ENCODE measurements at regions of chr12 and their contacts with region 1.

Region 1: GRCh38 chr12:14986449-14986848 is 13.6 kb downstream of the PDE6H start:
- DNase-seq: no peak
- H3K4me3 ChIP-seq: no peak overlapping the region
- H3K27ac ChIP-seq: no peak overlapping the region
- H3K4me1 ChIP-seq: no peaks in the 10 kb centered on the region
- H3K27me3 ChIP-seq: no peaks in the 10 kb centered on the region
- CTCF ChIP-seq: peak in 1 of 2 donors; percentile 20

Region 2: DNA sequence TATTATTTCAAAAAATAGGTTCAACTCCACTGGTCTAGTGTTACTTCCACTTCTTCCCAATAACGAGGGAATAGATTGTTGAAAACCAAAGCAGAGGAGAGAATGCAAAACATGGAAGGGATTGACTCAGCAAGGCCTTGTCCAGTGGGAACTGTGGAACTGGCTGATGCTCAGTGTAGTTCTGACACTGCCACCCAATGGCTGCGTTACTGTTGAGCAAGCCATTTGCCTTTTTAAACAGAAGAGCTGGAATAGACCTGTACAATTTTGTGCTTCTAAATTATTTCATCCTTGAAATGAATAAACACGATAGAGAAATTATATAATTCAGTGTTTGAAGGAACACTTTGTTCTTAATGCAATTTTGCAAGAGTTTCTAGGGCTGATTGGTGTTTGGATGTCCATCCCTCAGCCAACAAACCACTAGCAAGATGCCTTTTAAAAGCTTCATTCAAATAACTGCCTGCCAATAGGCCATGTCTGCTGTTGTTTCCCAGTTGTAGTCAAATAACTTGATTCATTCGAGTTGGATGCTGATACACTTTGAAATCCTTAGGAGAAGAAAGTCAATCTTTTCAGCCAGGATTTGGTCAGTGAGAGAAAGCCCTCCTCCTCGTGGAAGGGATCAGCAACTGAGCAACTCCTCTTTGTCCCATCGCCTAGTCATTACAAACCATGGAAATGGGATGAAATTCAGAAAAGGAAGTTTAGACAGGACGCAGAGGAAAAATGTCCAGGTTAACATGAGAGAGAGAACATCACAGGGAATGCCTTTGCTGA is 93.5 kb before region 1 on chr12:
- CTCF ChIA-PET with region 1: interaction called, 25 read pairs
- dilution Hi-C with region 1: no loop called
- in situ Hi-C with region 1: no loop called
- intact Hi-C with region 1: no loop called
- DNase-seq: no peak
- H3K4me3 ChIP-seq: no peak overlapping the region
- H3K27ac ChIP-seq: no peak overlapping the region
- H3K4me1 ChIP-seq: no peaks in the 10 kb centered on the region
- H3K27me3 ChIP-seq: no peaks in the 10 kb centered on the region
- CTCF ChIP-seq: peak in 1 of 2 donors; percentile 33

Region 3: GRCh38 chr12:15056218-15056617 is 69.8 kb after region 1 on chr12:
- CTCF ChIA-PET with region 1: no interaction called
- dilution Hi-C with region 1: no loop called
- in situ Hi-C with region 1: no loop called
- intact Hi-C with region 1: no loop called
- DNase-seq: no peak
- H3K4me3 ChIP-seq: no peak overlapping the region
- H3K27ac ChIP-seq: no peak overlapping the region
- H3K4me1 ChIP-seq: no peaks in the 10 kb centered on the region
- H3K27me3 ChIP-seq: no peaks in the 10 kb centered on the region
- CTCF ChIP-seq: no peak

Measured in mammary epithelial cell (primary cell).